ENCODE measurements at regions of chr10 and their contacts with region 1.

Region 1: GRCh38 chr10:132169766-132170603 is 16.8 kb upstream of the DPYSL4 start:
- DNase-seq: no peak
- ATAC-seq: peak; percentile 74
- H3K4me3 ChIP-seq: no peak overlapping the region
- H3K27ac ChIP-seq: no peak overlapping the region
- H3K4me1 ChIP-seq: no peaks in the 10 kb centered on the region
- H3K27me3 ChIP-seq: no peaks in the 10 kb centered on the region
- CTCF ChIP-seq: no peak; the same call in 1 of the 2 replicates

Region 2: GRCh38 chr10:131825150-131825848 is 344.7 kb before region 1 on chr10:
- CTCF ChIA-PET with region 1: no interaction called
- POLR2A ChIA-PET with region 1: no interaction called
- in situ Hi-C with region 1: no loop called
- intact Hi-C with region 1: no loop called
- DNase-seq: no peak
- ATAC-seq: peak; percentile 68
- H3K4me3 ChIP-seq: no peak overlapping the region
- H3K27ac ChIP-seq: no peak overlapping the region
- H3K4me1 ChIP-seq: peaks cover 18% of the 10 kb centered on the region
- H3K27me3 ChIP-seq: no peaks in the 10 kb centered on the region; the same call in 1 of the 2 replicates
- CTCF ChIP-seq: no peak

Region 3: GRCh38 chr10:132264966-132265901 is 95.2 kb after region 1 on chr10:
- CTCF ChIA-PET with region 1: no interaction called
- POLR2A ChIA-PET with region 1: no interaction called
- in situ Hi-C with region 1: no loop called
- intact Hi-C with region 1: no loop called
- DNase-seq: no peak
- ATAC-seq: peak; percentile 75
- H3K4me3 ChIP-seq: no peak overlapping the region
- H3K27ac ChIP-seq: peak overlapping the region; percentile 62
- H3K4me1 ChIP-seq: peaks cover 35% of the 10 kb centered on the region
- H3K27me3 ChIP-seq: no peaks in the 10 kb centered on the region
- CTCF ChIP-seq: no peak

Region 4: GRCh38 chr10:132347931-132348267 is 177.9 kb after region 1 on chr10:
- CTCF ChIA-PET with region 1: interaction called, 11 read pairs
- POLR2A ChIA-PET with region 1: no interaction called
- in situ Hi-C with region 1: no loop called
- intact Hi-C with region 1: no loop called
- DNase-seq: no peak
- ATAC-seq: no peak
- H3K4me3 ChIP-seq: no peak overlapping the region
- H3K27ac ChIP-seq: no peak overlapping the region
- H3K4me1 ChIP-seq: no peaks in the 10 kb centered on the region
- H3K27me3 ChIP-seq: no peaks in the 10 kb centered on the region
- CTCF ChIP-seq: no peak

Measured in Panc1 (cell line).